ENCODE measurements at regions of chr6 and their contacts with region 1.

Region 1: DNA sequence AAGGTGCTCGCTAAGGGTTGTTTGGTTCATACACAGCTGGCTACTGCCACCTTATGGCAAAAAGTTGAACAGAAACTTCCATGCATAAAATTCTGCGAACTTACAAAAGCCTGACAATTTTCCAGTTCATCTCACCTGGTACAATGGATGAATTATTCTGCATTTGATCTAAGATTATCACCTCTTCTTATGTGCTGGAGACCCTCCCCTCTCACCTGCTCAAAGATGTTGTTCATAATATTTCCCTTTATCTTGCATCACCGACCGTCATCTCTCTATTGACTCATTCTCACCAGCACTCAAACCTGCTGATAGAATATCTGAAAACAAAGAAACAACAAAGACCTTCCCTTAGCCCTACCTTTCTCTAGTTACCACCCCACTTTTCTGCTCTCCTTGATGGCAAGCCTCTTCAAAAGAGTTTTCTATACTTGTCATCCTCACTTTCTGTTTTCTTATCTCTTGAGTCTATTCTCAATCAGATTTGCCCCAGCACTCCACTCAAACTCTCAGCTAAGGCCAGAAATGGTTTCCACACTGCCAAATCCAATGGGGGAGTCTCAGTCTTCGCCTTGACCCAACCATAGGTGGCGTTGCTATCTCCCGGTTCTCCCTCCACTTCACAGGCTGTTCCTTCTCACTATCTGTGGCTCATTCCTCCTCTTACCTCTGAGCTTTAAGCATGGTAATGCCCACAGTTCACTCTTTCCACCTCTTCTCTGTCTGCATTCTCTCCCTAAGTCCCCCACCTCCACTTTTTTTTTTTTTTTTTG is 25.8 kb downstream of the SNRNP48 start:
- DNase-seq: no peak

Region 2: DNA sequence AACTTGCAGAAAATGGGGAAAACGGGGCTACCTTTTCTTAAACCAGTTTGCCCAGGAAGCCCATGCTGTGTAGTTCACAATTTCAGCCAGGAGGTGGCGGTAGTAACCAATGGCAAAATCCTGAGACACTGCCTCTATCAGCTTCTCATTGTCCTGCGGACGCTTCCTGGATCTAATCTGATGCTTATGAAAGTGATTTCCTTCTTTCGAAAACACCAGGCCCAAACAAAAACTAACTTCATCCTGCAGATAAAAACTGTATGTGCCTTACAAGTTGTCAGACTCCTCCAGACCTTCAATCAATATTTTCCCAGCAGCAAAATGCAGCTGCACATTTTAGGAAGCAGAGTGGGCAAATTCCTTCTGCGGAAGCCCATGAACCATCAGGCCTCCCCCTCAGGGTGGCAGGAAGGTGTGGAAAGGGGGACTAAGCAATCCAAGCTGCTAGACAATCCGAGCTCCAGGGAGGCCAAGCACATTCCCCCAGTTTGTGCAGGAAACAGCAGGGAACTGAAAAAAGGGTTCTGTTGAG is 938.8 kb before region 1 on chr6:
- intact Hi-C with region 1: loop called in 1 of 2 experiments (anchors 10 kb)
- DNase-seq: peak; percentile 85

Region 3: DNA sequence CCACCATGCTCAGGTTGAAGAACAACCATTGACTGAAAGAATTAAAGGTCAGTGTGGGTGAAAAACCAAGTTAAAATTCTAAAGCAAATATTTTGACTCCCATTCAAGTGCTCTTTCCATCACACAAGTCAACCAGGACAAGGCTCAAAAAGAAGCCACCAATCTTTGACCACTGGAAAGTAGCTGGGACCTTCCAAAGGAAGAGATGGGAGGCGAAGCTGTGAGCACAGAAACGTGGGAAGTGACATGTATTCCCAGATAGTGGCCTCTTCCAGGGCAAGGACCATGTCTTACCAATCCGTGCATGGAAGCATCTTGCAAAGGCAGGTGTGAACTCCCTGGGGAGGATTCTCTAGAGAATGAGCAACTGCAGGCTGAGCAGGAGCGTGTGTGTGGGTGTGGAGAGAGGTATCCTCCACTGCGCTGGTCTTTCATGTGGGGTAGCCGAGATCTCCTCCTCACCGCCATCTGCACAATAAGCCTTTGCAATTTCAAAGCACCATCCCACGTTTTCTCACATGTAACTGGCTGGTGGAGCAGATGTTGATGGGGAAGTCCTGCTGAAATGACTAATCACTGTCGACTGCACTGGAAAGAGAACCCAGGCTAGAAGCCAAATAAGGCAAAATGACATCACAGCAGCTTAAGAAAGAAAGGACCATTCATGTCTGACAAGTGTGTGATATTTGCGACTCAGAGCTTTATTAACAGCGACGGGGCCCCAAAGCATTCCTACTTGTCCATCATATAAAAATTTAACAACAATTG is 697.4 kb before region 1 on chr6:
- intact Hi-C with region 1: no loop called
- DNase-seq: no peak

Region 4: DNA sequence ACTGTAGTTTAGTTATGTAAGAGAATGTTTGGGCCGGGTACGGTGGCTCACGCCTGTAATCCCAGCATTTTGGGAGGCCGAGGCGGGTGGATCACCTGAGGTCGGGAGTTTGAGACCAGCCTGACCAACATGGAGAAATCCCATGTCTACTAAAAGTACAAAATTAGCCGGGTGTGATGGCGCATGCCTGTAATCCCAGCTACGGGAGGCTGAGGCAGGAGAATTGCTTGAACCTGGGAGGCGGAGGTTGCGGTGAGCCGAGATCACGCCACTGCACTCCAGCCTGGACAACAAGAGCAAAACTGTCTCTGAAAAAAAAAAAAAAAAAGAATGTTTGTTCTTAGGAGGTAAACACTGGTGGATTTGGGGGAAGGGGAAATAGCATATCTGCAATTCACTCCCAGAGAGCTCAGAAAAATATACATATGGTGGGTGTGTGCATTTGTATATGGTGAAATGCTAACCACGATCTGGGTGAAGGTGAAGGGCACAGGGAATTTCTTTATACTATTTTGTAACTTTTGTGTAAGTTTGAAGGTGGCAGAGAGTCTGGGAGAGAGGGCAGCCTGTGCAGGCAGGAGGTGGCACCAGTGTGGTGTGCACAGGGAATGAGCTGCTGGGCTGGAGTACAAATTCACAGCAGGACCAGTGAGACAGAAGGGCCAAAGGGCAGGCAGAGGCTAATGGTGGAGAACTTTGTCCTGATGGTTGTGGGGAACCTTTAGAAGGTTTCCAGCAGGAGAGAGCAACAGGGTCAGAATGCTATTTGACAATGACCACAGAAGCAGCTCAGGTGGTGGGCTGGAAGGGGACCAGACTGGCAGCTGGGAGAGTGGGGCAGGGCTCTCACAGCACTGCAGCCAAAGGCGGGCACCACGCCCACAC is 345.2 kb before region 1 on chr6:
- intact Hi-C with region 1: loop called in 1 of 2 experiments (anchors 10 kb)
- DNase-seq: no peak

Region 5: GRCh38 chr6:7939184-7939863 is 323.5 kb after region 1 on chr6:
- intact Hi-C with region 1: no loop called
- DNase-seq: no peak

Measured in posterior vena cava (tissue), 2 donors.